H1 (cell line): ENCODE measurements at regions of chr11 and their contacts with region 1.

Region 1: GRCh38 chr11:75399344-75400145 is at the start of gene RPS3:
- DNase-seq: peak; percentile 80 to 90
- H3K4me3 ChIP-seq: peak within 1 kb of the TSS; percentile 86 to 100 (median 99)
- H3K27ac ChIP-seq: peak within 1 kb of the TSS; percentile 97
- H3K4me1 ChIP-seq: peaks cover 0 to 9% (median 4%) of the 10 kb centered on the region in 4 experiments; a peak in 6 of 7 replicates
- H3K27me3 ChIP-seq: no peaks in the 10 kb centered on the region
- CTCF ChIP-seq: no peak
- EP300 ChIP-seq: no peak
- POLR2A ChIP-seq: peak; percentile 99
- RAD21 ChIP-seq: no peak
- total RNA-seq, gene RPS3: 3,813 and 3,882 TPM in 2 replicates

Region 2: DNA sequence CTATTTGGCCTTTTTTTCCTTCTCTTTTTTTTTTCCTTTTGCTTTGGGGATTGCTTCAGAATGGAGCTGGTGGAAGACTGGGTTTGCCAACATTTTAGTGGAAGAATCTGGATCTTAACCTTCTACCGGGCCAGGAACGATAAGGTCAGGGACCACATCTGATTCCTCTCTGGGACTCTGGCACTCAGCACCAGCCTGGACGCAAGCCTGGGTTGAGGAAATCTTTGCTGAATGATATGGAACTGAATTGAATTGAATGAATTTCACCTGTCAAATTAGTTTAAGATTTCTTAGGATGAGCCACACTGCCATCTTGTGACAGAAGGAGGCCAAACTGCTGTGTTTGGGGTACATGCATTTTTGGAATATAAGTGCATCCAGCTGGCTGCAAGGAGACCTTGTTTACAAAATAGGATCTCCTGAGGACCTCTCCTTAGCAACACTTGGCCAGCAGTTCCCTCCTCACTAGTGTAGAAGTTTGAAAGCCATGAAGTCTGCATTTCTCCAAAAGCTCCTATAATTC is 128.6 kb before region 1 on chr11:
- CTCF ChIA-PET with region 1: interaction called, 5 read pairs
- POLR2A ChIA-PET with region 1: interaction called, 11 read pairs
- DNase-seq: no peak
- H3K4me3 ChIP-seq: no peak overlapping the region
- H3K27ac ChIP-seq: no peak overlapping the region
- H3K4me1 ChIP-seq: peaks cover 0 to 2% (median 0%) of the 10 kb centered on the region in 4 experiments; a peak in 1 of 7 replicates
- H3K27me3 ChIP-seq: no peaks in the 10 kb centered on the region
- CTCF ChIP-seq: peak in 2 of 3 experiments; percentile 41 to 60; a peak in 3 of 4 replicates
- EP300 ChIP-seq: no peak
- POLR2A ChIP-seq: no peak
- RAD21 ChIP-seq: peak; percentile 47 to 60

Region 3: DNA sequence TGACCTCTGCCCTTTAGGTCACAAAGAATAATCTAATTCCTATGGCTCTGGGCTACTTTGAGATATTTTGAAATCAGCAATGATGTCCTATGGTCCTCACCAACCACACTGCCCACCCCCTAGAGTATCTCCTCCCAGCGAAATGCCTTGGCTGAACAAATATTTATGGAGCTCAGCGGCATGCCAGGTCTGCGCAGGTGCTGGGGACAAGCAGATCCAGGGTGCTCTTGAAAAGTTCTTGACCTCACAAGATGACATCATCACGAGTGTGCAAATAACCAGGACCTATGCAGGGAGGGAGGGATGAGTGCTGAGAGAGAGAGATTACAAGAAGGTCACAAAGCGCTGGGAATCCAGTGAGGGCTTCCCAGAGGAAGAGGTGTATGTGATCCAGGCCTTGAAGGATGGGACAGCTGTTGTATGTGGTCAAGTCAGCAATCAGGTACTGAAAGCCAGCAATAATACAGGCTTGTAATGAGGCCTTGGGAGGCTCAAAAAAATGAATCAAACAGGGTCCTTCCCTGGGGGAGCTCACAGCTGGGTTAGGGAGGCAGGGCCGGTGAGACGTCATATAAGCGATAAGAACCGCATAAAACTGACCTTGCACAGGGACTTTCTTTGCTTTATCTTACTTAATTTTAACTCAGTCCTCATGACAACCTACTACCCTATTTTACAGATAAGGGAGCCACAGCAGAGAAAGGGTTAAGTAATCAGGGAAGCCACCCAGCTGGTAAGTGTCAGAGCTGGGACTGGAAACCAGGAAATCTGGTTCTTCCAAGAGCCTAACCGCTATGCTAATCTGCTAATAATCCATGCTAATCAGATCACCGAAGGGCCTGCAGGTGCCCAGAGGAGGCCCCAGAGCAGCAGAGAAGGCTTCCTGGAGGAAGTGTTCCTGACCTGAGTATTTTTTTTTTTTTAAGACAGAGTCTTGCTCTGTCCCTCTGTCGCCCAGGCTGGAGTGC is 56.4 kb before region 1 on chr11:
- CTCF ChIA-PET with region 1: interaction called, 4 read pairs
- POLR2A ChIA-PET with region 1: interaction called, 30 read pairs
- DNase-seq: no peak
- H3K4me3 ChIP-seq: no peak overlapping the region; a peak in 1 of 8 replicates
- H3K27ac ChIP-seq: no peak overlapping the region
- H3K4me1 ChIP-seq: peaks cover 17 to 45% (median 27%) of the 10 kb centered on the region in 4 experiments
- H3K27me3 ChIP-seq: no peaks in the 10 kb centered on the region
- CTCF ChIP-seq: no peak
- EP300 ChIP-seq: peak in 1 of 2 experiments; percentile 46; a peak in 1 of 3 replicates
- POLR2A ChIP-seq: no peak
- RAD21 ChIP-seq: no peak

Region 4: DNA sequence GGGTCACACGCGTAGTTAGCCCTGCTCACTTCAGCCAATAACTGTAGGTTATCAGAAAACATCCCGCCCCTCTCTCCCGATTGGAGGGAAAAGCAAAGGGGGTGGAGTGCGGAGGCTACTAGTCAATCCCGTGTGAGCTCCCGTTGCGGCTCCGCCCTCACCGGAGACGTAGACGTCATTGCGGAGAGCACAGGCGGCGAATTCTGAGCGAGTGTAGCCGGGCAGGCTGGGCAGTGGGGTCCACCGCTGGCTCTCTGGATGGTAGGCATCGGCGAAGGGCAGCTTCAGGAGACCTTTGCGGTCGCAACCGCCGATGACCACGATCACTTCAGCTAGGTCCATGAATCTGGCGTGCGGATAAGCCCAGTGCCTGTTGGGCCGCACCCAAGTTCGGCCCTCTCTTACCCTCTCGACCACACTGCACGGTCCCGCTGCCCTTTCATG is 28.8 kb after region 1 on chr11:
- CTCF ChIA-PET with region 1: interaction called, 20 read pairs
- POLR2A ChIA-PET with region 1: interaction called, 570 read pairs
- DNase-seq: no peak
- H3K4me3 ChIP-seq: no peak overlapping the region
- H3K27ac ChIP-seq: no peak overlapping the region
- H3K4me1 ChIP-seq: peaks cover 0 to 23% (median 15%) of the 10 kb centered on the region in 4 experiments; a peak in 6 of 7 replicates
- H3K27me3 ChIP-seq: peaks cover 47 to 66% (median 60%) of the 10 kb centered on the region in 4 experiments
- CTCF ChIP-seq: no peak
- EP300 ChIP-seq: no peak
- POLR2A ChIP-seq: no peak
- RAD21 ChIP-seq: no peak

Region 5: DNA sequence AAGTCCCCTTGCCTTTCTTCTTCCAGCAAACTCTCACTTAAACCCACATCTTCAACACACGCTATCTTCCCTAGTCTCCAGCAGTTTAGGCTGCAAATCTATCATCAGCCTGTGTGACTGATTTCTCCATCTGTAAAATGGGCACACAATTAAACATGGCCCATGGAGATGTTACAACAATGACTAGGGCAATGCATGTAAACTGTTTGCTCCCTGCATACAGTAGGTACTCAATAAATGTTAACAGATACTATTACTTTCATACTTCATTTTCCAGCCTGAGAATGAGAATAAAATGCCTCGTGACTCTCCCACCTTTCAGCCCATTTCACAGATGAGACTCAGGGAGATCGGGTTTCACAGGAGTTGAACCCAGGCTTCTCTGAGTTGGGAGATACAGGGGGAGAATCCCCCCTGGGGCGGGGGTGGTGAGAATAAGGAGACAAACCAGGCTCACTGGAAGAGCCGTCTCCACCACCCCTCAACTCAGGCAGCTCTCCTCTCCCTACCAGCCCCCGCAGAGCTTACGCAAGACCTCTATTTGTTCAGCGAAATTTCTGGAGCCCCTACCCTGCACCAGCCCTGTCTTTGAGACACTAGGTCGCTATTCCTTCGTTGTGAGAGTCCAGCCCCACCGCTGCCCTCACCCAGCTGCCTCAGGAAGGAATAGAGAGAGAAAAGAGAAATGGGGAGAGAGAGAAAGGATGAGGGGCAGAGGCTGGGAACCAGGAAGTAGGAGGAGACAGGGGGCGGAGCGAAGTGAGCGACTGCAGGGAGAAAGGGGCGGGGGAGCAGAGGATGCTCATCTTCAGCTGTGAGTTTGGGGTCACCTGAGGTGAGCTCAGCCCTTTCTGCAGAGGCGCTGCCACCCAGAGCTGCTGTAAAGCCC is 75.6 kb after region 1 on chr11:
- CTCF ChIA-PET with region 1: no interaction called
- POLR2A ChIA-PET with region 1: interaction called, 13 read pairs
- DNase-seq: peak; percentile 38 to 86
- H3K4me3 ChIP-seq: peak overlapping the region in 2 of 4 experiments; percentile 17 to 55; a peak in 5 of 8 replicates
- H3K27ac ChIP-seq: no peak overlapping the region; the same call in 1 of the 2 replicates
- H3K4me1 ChIP-seq: peaks cover 3 to 8% (median 4%) of the 10 kb centered on the region in 4 experiments; a peak in 5 of 7 replicates
- H3K27me3 ChIP-seq: no peaks in the 10 kb centered on the region
- CTCF ChIP-seq: no peak
- EP300 ChIP-seq: no peak
- POLR2A ChIP-seq: peak in 1 of 2 experiments; percentile 47; a peak in 1 of 3 replicates
- RAD21 ChIP-seq: no peak

Region 6: DNA sequence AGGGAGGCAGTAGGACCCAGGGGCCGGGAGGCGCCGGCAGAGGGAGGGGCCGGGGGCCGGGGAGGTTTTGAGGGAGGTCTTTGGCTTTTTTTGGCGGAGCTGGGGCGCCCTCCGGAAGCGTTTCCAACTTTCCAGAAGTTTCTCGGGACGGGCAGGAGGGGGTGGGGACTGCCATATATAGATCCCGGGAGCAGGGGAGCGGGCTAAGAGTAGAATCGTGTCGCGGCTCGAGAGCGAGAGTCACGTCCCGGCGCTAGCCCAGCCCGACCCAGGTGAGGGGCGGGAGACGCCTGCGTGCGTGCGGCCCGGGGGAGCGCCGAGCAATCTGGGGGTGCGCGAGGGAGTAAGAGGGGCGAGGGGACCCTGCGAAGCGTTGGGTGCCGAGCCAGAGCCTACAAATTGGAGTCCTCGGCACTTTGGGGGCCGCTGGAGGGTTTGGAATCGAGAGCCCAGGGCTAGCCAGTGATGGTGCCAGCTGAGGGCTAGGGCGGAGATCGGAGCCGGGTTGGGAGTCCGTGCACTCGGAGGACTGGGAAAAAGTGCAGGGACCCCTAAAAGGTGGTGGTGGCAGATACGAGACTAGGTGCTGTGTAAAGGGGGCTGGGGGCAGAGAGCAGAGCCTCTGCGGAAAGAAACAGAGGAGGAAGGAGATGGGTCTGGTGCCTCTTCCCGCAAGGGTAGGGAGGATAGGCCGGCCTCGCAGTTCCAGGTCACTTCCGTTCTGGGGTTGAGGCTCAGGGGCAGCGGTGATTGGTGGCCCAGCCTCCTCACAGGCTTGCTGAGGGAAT is 162.7 kb after region 1 on chr11 and contains the start of gene SERPINH1:
- CTCF ChIA-PET with region 1: no interaction called
- POLR2A ChIA-PET with region 1: interaction called, 10 read pairs
- DNase-seq: peak in 1 of 2 experiments; percentile 83
- H3K4me3 ChIP-seq: peak within 1 kb of the TSS; percentile 62 to 93 (median 84)
- H3K27ac ChIP-seq: peak within 1 kb of the TSS; percentile 95
- H3K4me1 ChIP-seq: peaks cover 10 to 57% (median 39%) of the 10 kb centered on the region in 4 experiments
- H3K27me3 ChIP-seq: no peaks in the 10 kb centered on the region
- CTCF ChIP-seq: no peak
- EP300 ChIP-seq: no peak
- POLR2A ChIP-seq: peak; percentile 77 to 86; a peak in 2 of 3 replicates
- RAD21 ChIP-seq: no peak; a peak in 1 of 4 replicates
- total RNA-seq, gene SERPINH1: 420 and 424 TPM in 2 replicates